ENCODE measurements at regions of chrX and their contacts with region 1.

Region 1: DNA sequence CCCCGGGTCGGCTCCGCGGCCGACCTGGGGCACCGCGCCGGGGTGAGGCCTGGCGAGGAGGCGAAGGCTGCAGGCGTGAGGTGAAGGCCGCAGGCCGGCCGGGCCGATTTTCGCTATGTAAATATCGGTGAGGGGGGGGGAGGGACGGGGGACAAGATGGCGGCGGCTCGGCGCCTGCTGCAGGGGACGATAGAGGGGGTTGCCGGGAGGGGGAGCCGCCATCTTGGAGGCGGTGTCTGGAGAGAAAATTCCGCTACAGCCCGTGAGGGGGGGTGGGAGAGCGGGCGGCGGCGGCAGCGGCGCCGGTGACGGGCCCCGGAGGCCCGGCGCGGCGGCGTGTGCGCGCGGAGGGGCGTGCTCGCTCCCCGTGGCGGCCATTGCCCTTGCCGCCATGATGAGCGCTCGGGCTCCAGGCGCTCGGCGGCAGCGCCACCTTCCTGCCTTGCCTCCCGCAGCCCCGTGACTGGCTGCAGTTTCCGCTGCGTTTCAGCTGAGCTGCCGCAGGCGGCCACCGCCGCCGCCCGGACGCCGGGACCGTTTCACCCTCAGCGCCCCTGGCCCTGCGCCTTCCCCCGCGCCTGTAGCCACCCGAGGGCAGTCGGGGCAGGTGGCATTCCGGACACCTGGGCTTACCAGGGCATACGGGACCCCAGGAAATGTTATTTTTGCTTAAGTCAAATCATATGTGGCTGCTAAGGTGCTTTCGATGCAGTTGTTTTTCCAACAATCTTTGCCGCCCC is 692 bp downstream of the ZFX start:
- DNase-seq: peak; percentile 89
- H3K4me3 Mint-ChIP-seq: peak overlapping the region; percentile 79
- H3K27ac Mint-ChIP-seq: peak overlapping the region; percentile 83
- H3K4me1 Mint-ChIP-seq: peaks cover 54% of the 10 kb centered on the region
- H3K27me3 Mint-ChIP-seq: no peaks in the 10 kb centered on the region

Region 2: GRCh38 chrX:23782863-23783568 is 367.2 kb before region 1 on chrX and contains the start of gene SAT1:
- CTCF ChIA-PET with region 1: no interaction called
- POLR2A ChIA-PET with region 1: no interaction called
- intact Hi-C with region 1: loop called (anchors 5 kb)
- DNase-seq: peak; percentile 95
- H3K4me3 Mint-ChIP-seq: peak within 1 kb of the TSS; percentile 94
- H3K27ac Mint-ChIP-seq: peak within 1 kb of the TSS; percentile 96
- H3K4me1 Mint-ChIP-seq: peaks cover 28% of the 10 kb centered on the region
- H3K27me3 Mint-ChIP-seq: no peaks in the 10 kb centered on the region
- total RNA-seq, gene SAT1: 205 to 209 TPM

Region 3: GRCh38 chrX:24024819-24025740 is 125.1 kb before region 1 on chrX:
- CTCF ChIA-PET with region 1: no interaction called
- POLR2A ChIA-PET with region 1: no interaction called
- intact Hi-C with region 1: loop called (anchors 1 kb)
- DNase-seq: peak; percentile 91
- H3K4me3 Mint-ChIP-seq: peak overlapping the region; percentile 80
- H3K27ac Mint-ChIP-seq: no peak overlapping the region
- H3K4me1 Mint-ChIP-seq: peaks cover 25% of the 10 kb centered on the region
- H3K27me3 Mint-ChIP-seq: no peaks in the 10 kb centered on the region

Region 4: GRCh38 chrX:24097741-24098260 is 52.4 kb before region 1 on chrX:
- CTCF ChIA-PET with region 1: interaction called, 4 read pairs
- POLR2A ChIA-PET with region 1: interaction called, 4 read pairs
- intact Hi-C with region 1: loop called (anchors 5 kb)
- DNase-seq: no peak
- H3K4me3 Mint-ChIP-seq: no peak overlapping the region
- H3K27ac Mint-ChIP-seq: no peak overlapping the region
- H3K4me1 Mint-ChIP-seq: peaks cover 20% of the 10 kb centered on the region
- H3K27me3 Mint-ChIP-seq: no peaks in the 10 kb centered on the region

Region 5: DNA sequence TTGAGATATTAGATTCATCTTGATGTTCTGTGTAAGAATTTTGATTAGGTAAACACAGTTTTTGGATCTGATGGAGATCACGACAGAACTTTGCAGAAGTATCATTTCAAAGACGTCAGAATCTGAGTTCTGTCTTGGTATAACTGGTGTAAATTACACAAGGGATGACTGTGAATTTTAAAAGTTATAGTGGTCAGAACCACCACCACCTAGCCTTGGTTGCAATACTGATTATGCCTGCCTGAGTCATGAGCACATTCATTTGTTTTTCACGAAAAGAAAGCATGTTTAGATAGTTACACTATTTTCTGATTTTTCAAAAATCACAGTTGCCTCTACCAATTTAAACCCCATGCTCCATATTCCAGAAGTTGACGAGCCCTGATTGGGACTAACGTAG is 54.1 kb after region 1 on chrX:
- CTCF ChIA-PET with region 1: no interaction called
- POLR2A ChIA-PET with region 1: no interaction called
- intact Hi-C with region 1: loop called (anchors 5 kb)
- DNase-seq: no peak
- H3K4me3 Mint-ChIP-seq: no peak overlapping the region
- H3K27ac Mint-ChIP-seq: peak overlapping the region; percentile 23
- H3K4me1 Mint-ChIP-seq: peaks cover 49% of the 10 kb centered on the region
- H3K27me3 Mint-ChIP-seq: no peaks in the 10 kb centered on the region

Region 6: GRCh38 chrX:24479924-24480323 is 329.7 kb after region 1 on chrX:
- CTCF ChIA-PET with region 1: no interaction called
- POLR2A ChIA-PET with region 1: no interaction called
- intact Hi-C with region 1: loop called (anchors 2 kb)
- DNase-seq: peak; percentile 85
- H3K4me3 Mint-ChIP-seq: peak overlapping the region; percentile 69
- H3K27ac Mint-ChIP-seq: peak overlapping the region; percentile 97
- H3K4me1 Mint-ChIP-seq: peaks cover 63% of the 10 kb centered on the region
- H3K27me3 Mint-ChIP-seq: no peaks in the 10 kb centered on the region

Measured in activated CD4-positive, alpha-beta memory T cell treated with anti-CD3 and anti-CD28 coated beads for 36 hours (primary cell).